ENCODE measurements at regions of chr20 and their contacts with region 1.

Region 1: DNA sequence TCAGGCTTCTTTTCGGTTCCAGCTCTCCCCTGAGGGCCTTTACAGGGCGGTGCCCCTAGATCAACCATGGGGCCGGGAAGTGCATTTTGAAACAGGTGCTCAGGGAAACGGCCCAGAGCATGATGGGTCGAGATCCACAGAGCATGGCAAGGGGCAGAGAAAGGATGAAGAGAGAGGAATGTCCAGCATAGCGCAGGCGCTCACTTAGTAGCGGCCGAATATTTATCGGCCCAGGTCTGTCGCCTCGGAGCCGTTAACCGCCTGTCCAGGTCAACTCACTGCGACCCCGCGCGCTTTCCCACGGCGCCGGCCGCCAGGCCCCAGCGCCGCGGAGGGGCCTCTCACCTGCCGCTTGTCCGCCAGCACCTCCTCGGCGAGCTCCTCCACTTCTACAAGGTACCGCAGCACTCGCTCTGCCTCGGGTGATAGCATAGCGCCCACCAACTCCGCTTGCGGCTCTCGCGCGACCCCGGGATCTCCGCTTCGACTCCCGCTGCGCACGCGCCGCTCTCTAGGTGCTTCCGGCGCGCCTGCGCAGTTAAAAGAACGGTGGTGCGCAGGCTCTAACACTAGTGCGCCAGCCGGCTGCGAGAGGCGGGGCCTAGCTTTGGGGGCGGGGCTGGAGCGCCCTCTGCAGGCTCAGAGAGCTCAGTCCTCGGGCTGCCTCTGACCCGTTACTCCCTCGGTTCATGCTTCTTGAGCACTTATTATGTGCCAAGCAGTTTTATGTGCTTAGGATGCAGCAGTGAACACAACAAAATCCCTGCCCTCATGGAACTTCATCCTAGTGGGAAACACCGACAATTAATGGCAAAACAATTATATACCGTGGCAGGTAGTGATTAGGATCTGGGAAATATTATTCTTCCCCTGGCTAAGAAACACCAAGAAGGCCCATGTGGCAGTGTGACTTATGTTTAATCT is at the start of gene PDRG1:
- DNase-seq: peak; percentile 95 to 96
- H3K4me3 ChIP-seq: peak within 1 kb of the TSS; percentile 42 to 81 (median 67)
- H3K27ac ChIP-seq: peak within 1 kb of the TSS in 2 of 3 donors; percentile 63 to 84
- H3K4me1 ChIP-seq: peaks cover 10 to 16% of the 10 kb centered on the region in 2 donors
- H3K27me3 ChIP-seq: no peaks in the 10 kb centered on the region
- CTCF ChIP-seq: peak; percentile 83 to 97 (median 90)
- POLR2A ChIP-seq: peak; percentile 54 to 71
- total RNA-seq, gene PDRG1: 7.3 to 14.9 (median 9.2) TPM

Region 2: DNA sequence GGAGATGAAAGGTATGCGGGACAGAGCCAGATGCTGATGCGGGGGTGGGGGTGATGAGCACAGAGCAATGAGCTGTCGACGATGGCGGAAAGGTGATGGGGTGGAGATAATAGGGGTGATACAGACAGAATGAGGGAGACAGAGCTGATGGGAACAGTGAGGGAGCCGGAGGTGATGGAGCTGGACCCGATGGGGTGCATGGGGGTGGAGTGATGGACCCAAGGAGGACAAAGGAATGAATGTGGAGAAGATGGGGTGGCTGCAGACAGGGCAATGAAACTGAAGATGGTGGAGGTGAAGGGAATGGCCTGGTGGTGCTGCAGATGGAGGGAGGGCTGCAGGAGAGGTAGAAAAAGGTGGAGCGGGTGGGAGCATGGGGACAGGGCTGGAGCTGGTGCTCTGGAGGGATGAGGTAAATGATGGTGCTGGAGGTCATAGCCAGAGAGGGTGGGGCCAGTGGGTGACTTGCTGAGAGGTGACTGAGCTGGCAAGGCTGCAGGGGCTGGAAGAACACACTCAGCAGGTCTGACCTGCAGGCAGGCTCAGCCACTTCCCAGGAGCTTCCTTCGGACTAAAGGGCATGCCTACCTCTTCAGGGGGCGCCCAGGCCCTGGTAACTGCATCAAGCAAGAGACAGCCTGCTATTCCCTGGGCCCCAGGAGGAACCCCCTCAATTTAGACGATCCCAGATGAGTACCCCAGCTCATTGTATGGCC is 100.4 kb before region 1 on chr20:
- intact Hi-C with region 1: loop called (anchors 2 kb)
- DNase-seq: no peak
- H3K4me3 ChIP-seq: no peak overlapping the region
- H3K27ac ChIP-seq: no peak overlapping the region
- H3K4me1 ChIP-seq: peaks cover 0 to 3% of the 10 kb centered on the region in 2 donors
- H3K27me3 ChIP-seq: no peaks in the 10 kb centered on the region
- CTCF ChIP-seq: no peak
- POLR2A ChIP-seq: no peak

Measured in thyroid gland (tissue), 4 donors.